ENCODE measurements at regions of chr1 and their contacts with region 1.

Region 1: DNA sequence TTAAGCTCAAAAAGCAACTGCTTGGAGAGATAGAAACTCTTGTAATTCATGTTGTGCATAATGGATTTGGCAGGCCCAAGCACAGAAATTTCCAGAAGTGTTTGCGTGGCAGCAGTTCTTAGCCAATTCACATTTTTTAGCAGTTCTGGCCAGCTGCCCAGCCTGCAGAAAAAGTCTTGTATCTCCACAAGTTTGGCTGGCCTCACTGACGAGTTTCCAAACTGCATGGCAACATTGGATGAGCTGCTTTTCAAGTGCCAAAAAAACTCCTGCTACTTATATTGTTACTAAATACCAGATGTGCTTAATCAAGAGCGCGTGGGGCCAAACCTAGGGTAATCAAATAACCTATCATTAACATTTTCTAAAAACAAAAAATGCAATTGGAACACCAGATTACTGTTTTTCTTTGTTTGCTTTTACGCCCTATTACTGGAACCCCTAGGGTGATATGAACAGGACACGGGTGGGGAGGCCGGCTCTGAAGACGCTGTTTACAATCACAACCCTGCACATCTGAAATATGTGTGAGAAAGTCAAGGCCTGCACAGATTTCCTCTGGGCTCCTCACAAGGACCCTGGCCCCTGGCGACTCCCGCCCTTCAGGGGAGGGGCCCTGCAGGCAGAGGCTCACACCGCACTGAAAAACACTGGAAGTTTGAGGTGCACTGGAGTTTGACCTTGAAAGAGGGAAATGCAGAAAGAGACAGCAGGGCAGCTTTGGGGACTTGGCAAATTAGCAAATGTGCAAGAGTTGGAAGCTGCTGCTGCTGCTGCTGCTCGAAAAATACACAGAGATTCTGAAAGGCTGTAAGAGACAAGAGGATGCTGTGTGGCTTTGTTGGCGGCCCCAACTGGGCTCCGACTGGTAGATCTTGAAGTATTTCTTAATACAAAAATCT is 55.2 kb upstream of the TARBP1 start:
- DNase-seq: peak; percentile 99
- H3K4me3 ChIP-seq: no peak overlapping the region
- H3K27ac ChIP-seq: peak overlapping the region; percentile 98 to 99
- H3K4me1 ChIP-seq: peaks cover 16 to 99% (median 89%) of the 10 kb centered on the region in 4 donors
- H3K27me3 ChIP-seq: no peaks in the 10 kb centered on the region
- CTCF ChIP-seq: no peak

Region 2: DNA sequence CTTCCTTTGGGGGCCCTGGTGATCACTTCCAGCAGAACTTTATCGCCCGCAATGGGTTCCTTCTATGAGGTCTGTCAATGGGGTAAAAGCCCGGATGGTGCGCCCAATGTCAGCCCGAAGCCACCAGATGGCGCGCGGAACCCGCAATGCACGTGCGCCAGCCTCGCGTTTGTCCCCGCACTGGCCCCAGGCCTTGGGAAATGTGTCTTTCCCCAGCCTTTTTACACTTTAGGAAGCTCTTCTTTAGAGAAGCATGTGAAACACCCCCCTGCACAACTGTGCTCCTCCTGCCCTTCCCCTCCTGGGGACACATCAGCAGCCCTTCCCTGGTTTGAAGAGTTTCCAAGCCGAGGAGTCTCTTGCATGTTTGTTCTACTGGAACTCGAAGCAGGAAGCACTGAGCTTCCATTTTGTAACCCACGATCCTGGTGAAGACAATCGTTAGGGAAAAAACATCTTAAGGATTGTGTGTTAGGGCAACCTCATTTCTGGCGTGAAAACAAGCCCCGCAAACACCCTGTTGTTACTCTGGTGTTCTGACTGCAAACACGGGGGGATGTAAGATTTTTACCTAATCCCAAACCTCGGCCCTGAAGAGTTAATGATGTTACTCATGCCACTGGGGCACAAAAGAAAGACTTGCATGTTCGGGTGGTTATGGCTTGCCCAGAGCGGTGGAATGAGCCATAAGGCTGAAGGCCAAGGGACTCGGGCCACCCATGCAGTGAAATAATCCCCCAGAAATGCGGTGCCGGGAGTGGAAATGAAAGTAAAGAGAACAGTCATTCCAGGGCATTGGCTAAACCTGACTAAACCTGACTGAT is 34.9 kb before region 1 on chr1:
- intact Hi-C with region 1: loop called (anchors 5 kb)
- DNase-seq: peak; percentile 92 to 96
- H3K4me3 ChIP-seq: peak overlapping the region; percentile 30 to 37
- H3K27ac ChIP-seq: peak overlapping the region; percentile 84
- H3K4me1 ChIP-seq: peaks cover 0 to 51% (median 30%) of the 10 kb centered on the region in 4 donors
- H3K27me3 ChIP-seq: no peaks in the 10 kb centered on the region
- CTCF ChIP-seq: peak; percentile 97 to 98

Region 3: DNA sequence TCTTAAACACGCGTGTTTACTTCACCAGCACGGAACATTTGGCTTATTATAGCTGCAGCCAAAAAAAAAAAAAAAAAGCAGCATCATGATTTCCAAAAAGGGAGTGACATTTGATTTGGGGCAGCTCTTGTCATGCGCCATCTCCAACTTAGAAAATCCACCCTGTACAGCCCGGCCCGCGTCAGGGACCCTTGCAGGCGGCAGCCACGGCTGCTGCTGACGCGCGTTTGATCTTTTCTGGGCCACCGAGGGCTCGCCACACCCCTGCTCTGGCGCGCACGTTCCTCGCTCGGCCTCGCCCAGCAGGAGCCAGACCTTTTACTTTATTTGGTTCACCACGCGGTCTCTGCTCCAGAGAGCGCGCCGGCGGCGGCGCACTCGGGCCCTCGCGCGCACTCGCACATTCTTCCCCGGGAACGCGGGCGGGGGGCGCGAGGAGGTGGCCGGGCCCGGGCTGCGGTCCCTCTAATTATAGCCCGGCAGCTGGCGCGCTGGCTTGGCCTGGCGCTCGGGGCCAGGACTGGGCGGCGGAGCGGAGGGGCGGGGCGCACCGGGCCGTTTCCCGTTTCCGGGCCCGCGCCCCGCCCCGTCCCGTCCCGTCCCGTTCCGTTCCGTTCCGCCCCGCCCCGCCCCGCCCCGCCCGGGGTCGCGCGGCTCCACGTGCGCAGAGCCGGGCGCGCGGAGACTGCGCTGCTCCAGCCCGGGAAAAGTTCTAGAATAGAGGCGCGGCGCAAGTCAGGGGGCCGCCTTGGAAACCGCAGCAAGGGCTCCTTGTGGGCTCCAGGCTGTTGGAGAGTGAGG is 65.6 kb after region 1 on chr1:
- intact Hi-C with region 1: loop called (anchors 2 kb)
- DNase-seq: peak; percentile 83 to 97
- H3K4me3 ChIP-seq: peak overlapping the region; percentile 53
- H3K27ac ChIP-seq: peak overlapping the region; percentile 84 to 98
- H3K4me1 ChIP-seq: peaks cover 0 to 60% (median 39%) of the 10 kb centered on the region in 4 donors
- H3K27me3 ChIP-seq: no peaks in the 10 kb centered on the region
- CTCF ChIP-seq: no peak

Region 4: DNA sequence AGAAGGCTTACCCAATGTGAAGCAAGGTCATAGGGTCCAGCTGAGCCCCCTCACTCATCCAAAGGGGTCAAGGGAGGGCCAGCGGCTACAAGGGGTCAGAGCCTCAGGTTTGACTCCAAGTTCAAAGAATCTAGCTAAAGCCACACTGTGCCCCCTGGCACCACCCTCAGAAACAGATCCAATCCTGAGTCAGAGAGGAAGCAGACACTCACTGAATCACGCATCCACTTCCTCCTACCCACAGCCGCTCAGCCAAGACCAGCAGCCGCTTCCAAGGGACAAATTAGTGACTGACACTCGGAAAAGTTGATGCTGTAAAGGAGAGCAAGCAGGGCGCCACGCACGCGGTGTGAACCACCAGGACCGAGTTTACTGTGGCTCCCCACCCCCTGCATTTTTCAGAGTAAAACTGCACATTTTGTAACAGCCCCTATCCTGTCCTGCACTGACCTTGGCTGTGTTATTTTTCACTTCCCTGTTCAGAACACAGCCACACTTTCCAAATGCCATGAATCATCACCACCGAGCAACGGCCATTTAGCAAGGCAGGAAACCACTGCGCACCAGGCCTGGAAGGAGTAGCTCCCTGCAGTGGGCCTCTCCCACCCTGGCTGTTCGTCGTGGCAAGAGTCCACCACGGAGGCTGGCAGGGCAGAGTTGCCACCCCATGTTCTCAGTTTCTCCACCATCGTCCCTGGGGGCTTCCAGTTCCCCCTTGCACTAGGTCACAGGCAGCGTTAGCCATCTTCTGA is 446.6 kb after region 1 on chr1:
- intact Hi-C with region 1: loop called (anchors 10 kb)
- DNase-seq: peak; percentile 93 to 95
- H3K4me3 ChIP-seq: peak overlapping the region; percentile 7 to 17
- H3K27ac ChIP-seq: peak overlapping the region; percentile 87
- H3K4me1 ChIP-seq: peaks cover 9 to 88% (median 55%) of the 10 kb centered on the region in 4 donors
- H3K27me3 ChIP-seq: no peaks in the 10 kb centered on the region
- CTCF ChIP-seq: no peak